ENCODE measurements at regions of chr2 and their contacts with region 1.

Region 1: DNA sequence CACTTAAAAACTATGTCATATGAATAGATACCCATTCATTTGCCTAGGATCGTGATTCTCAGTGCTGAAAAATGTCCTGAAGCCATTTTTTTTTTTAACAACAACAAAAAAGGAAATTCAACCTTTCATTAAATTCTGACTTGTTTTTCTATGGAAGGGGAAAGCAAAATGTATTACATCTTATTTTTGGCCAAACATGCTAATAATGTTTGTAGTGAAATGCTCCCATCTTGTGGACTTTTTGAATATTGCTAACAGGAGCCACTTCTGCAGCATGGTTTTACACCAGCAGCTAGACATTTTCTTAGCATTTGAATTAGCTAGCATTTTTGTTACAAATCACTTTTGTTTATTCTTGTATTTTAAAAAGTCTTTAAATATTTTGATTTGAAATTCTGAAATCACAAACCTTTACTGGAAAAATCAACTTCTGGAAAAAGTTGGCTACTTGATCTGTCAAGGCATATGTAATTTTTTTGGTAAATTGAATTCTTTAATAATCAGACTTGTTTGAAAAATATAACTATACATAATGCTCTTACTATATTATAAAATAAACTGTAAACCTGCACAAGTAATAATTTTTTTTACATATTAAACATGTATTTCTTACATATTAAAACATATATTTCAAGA is 75.8 kb downstream of the KIDINS220 start:
- DNase-seq: no peak
- H3K4me3 ChIP-seq: no peak overlapping the region
- H3K27ac ChIP-seq: no peak overlapping the region
- H3K27me3 ChIP-seq: no peaks in the 10 kb centered on the region
- CTCF ChIP-seq: peak; percentile 68

Region 2: GRCh38 chr2:7427293-7428060 is 1334.2 kb before region 1 on chr2:
- CTCF ChIA-PET with region 1: interaction called, 19 read pairs
- POLR2A ChIA-PET with region 1: no interaction called
- DNase-seq: peak; percentile 4
- H3K4me3 ChIP-seq: no peak overlapping the region
- H3K27ac ChIP-seq: no peak overlapping the region
- H3K27me3 ChIP-seq: peaks cover 5% of the 10 kb centered on the region
- CTCF ChIP-seq: peak; percentile 71

Region 3: GRCh38 chr2:8693155-8693821 is 68.4 kb before region 1 on chr2:
- CTCF ChIA-PET with region 1: interaction called, 18 read pairs
- POLR2A ChIA-PET with region 1: no interaction called
- DNase-seq: no peak
- H3K4me3 ChIP-seq: peak overlapping the region; percentile 29
- H3K27ac ChIP-seq: no peak overlapping the region
- H3K27me3 ChIP-seq: no peaks in the 10 kb centered on the region
- CTCF ChIP-seq: peak; percentile 68